ENCODE measurements at regions of chr2 and their contacts with region 1.

Region 1: GRCh38 chr2:39913648-39914461 is 134.8 kb upstream of the THUMPD2 start:
- DNase-seq: peak in 1 of 3 donors; percentile 24
- ATAC-seq: peak; percentile 59
- H3K4me3 ChIP-seq: no peak overlapping the region
- H3K4me1 ChIP-seq: no peaks in the 10 kb centered on the region
- CTCF ChIP-seq: peak; percentile 46

Region 2: GRCh38 chr2:39975476-39976020 is 61.7 kb after region 1 on chr2:
- intact Hi-C with region 1: no loop called
- DNase-seq: no peak
- ATAC-seq: no peak
- H3K4me3 ChIP-seq: no peak overlapping the region
- H3K4me1 ChIP-seq: no peaks in the 10 kb centered on the region
- CTCF ChIP-seq: no peak

Region 3: GRCh38 chr2:40554668-40555285 is 640.9 kb after region 1 on chr2:
- intact Hi-C with region 1: loop called in 1 of 2 experiments (anchors 2 kb)
- DNase-seq: peak in 2 of 3 donors; percentile 34 to 87
- ATAC-seq: peak; percentile 76
- H3K4me3 ChIP-seq: no peak overlapping the region
- H3K4me1 ChIP-seq: no peaks in the 10 kb centered on the region
- CTCF ChIP-seq: peak; percentile 39

Region 4: GRCh38 chr2:41782306-41783158 is 1868.7 kb after region 1 on chr2:
- intact Hi-C with region 1: loop called in 1 of 2 experiments (anchors 10 kb)
- DNase-seq: peak in 1 of 3 donors; percentile 28
- ATAC-seq: peak; percentile 44
- H3K4me3 ChIP-seq: no peak overlapping the region
- H3K4me1 ChIP-seq: no peaks in the 10 kb centered on the region
- CTCF ChIP-seq: peak; percentile 55

Measured in mucosa of descending colon (tissue), 3 donors.